Caco-2 (cell line): ENCODE measurements at regions of chr3 and their contacts with region 1.

Region 1: DNA sequence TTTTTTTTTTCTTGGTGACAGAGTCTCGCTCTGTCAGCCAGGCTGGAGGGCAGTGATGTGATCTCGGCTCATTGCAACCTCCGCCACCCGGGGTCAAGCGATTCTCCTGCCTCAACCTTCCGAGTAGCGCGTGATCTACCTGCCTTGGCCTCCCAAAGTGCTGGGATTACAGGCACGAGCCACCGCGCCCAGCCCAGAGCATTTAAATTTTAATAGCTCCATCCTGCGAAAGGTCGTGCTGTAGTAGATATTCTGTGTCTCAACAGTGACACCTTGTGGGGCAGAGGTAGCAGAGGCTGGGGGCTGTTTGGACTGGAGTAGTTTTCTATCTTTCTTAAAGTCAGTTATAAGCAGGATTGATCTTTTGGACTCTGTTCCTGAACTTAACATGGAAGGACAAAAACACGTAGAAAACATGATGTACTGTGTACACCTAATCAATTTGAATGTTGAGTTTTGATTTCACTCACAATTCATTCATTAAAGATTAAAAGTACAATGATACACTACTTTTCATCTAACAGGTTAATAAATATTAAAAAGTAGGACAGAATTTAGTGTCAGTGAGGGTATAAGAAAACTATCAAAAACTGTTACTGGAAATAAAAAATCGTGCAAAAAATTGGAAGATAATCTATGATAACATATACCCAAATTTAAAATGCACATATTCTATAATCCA is 11.0 kb upstream of the PDCD6IP start:
- DNase-seq: peak; percentile 70 to 71
- H3K4me3 ChIP-seq: peak overlapping the region; percentile 38
- H3K4me3 Mint-ChIP-seq: peak overlapping the region; percentile 63
- H3K27ac Mint-ChIP-seq: no peak overlapping the region
- H3K4me1 ChIP-seq: no peaks in the 10 kb centered on the region
- H3K4me1 Mint-ChIP-seq: peaks cover 11% of the 10 kb centered on the region
- H3K27me3 ChIP-seq: no peaks in the 10 kb centered on the region
- H3K27me3 Mint-ChIP-seq: no peaks in the 10 kb centered on the region
- CTCF ChIP-seq: peak; percentile 75 to 82

Region 2: DNA sequence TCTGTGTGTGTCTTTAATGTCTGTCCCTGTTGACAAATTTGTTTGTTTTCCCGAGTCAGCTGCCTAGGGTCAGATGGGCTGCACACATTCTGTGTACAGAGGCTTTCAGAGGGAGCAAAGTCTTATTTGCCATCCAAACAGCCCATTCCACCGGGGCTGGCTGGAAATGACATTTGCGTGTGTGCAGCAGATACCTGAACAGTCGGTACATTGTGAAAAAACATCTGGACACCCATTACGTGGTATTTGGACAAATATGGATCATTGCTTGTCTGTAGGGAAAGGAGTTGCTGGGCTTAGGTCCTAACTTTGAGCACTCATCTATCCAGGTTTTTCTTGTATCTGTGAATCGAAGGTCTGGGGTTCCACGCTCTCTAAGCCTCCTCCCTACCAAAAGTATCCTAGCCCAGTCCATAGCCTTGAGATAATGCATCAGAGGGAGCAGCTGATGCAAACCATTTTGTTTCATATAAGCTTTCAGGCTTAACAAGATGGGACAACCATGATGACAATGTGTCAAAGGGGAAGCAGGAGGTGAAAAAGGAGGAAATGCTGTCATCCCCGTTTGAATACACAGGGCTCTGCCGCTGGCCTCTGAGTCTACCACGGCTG is 1571.2 kb before region 1 on chr3:
- CTCF ChIA-PET with region 1: no interaction called
- POLR2A ChIA-PET with region 1: no interaction called
- intact Hi-C with region 1: no loop called
- DNase-seq: peak; percentile 90
- H3K4me3 ChIP-seq: no peak overlapping the region
- H3K4me3 Mint-ChIP-seq: peak overlapping the region; percentile 71
- H3K27ac Mint-ChIP-seq: peak overlapping the region; percentile 91
- H3K4me1 ChIP-seq: peaks cover 28% of the 10 kb centered on the region
- H3K4me1 Mint-ChIP-seq: peaks cover 7% of the 10 kb centered on the region
- H3K27me3 ChIP-seq: no peaks in the 10 kb centered on the region
- H3K27me3 Mint-ChIP-seq: no peaks in the 10 kb centered on the region
- CTCF ChIP-seq: no peak

Region 3: DNA sequence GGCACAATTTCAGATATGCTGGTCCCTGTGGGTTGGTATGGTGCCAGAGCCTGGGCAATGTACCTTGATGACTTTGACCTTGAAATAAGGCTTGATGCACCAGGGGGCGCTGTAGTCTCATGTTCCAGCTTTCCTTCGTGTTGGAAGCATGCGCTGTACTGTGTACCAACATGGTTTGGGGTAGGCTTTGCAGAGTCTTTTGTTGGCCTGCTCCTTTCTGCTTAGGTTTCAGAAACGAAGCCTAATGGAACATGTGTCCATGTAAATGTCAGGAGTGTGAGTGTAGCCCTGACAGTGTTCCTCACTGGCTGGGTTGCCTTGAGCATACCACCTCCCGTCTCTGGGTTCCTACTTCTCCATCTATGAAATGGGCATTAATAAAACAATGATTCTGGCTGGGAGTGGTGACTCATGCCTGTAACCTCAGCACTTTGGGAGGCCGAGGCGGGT is 839.7 kb before region 1 on chr3:
- CTCF ChIA-PET with region 1: interaction called, 4 read pairs
- POLR2A ChIA-PET with region 1: no interaction called
- intact Hi-C with region 1: loop called (anchors 5 kb)
- DNase-seq: peak; percentile 82 to 85
- H3K4me3 ChIP-seq: no peak overlapping the region
- H3K4me3 Mint-ChIP-seq: no peak overlapping the region
- H3K27ac Mint-ChIP-seq: no peak overlapping the region
- H3K4me1 ChIP-seq: no peaks in the 10 kb centered on the region
- H3K4me1 Mint-ChIP-seq: peaks cover 10% of the 10 kb centered on the region
- H3K27me3 ChIP-seq: no peaks in the 10 kb centered on the region; the same call in 1 of the 2 replicates
- H3K27me3 Mint-ChIP-seq: no peaks in the 10 kb centered on the region
- CTCF ChIP-seq: peak; percentile 54 to 82

Region 4: DNA sequence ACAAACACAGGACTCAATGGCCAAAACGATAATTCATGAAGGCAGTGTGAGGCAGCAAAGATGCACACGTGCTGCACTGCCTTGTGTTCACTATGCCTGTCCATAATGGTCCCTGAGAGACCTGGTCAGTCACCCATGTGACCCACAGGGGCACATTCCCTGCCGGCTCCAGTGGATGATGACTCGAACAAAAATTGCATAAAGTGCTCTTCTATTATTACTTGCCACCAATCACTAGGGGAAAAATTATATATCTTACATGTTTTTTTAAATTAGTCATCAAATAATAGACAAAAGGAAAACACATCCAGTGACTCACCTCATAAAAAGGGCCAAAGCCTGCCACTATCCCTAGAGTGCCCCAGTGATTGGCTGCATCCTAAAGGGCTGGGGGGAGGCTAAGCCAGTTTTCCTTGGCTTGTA is 394.8 kb before region 1 on chr3:
- CTCF ChIA-PET with region 1: no interaction called
- POLR2A ChIA-PET with region 1: no interaction called
- intact Hi-C with region 1: loop called (anchors 10 kb)
- DNase-seq: no peak
- H3K4me3 ChIP-seq: no peak overlapping the region
- H3K4me3 Mint-ChIP-seq: no peak overlapping the region
- H3K27ac Mint-ChIP-seq: no peak overlapping the region
- H3K4me1 ChIP-seq: no peaks in the 10 kb centered on the region
- H3K4me1 Mint-ChIP-seq: no peaks in the 10 kb centered on the region
- H3K27me3 ChIP-seq: no peaks in the 10 kb centered on the region
- H3K27me3 Mint-ChIP-seq: no peaks in the 10 kb centered on the region
- CTCF ChIP-seq: no peak

Region 5: GRCh38 chr3:33544126-33544525 is 243.3 kb before region 1 on chr3:
- CTCF ChIA-PET with region 1: no interaction called
- POLR2A ChIA-PET with region 1: no interaction called
- intact Hi-C with region 1: loop called (anchors 10 kb)
- DNase-seq: no peak
- H3K4me3 ChIP-seq: no peak overlapping the region
- H3K4me3 Mint-ChIP-seq: no peak overlapping the region
- H3K27ac Mint-ChIP-seq: no peak overlapping the region
- H3K4me1 ChIP-seq: no peaks in the 10 kb centered on the region
- H3K4me1 Mint-ChIP-seq: no peaks in the 10 kb centered on the region
- H3K27me3 ChIP-seq: no peaks in the 10 kb centered on the region
- H3K27me3 Mint-ChIP-seq: no peaks in the 10 kb centered on the region
- CTCF ChIP-seq: no peak

Region 6: GRCh38 chr3:33773637-33774036 is 13.8 kb before region 1 on chr3:
- CTCF ChIA-PET with region 1: interaction called, 20 read pairs
- POLR2A ChIA-PET with region 1: no interaction called
- intact Hi-C with region 1: no loop called
- DNase-seq: no peak
- H3K4me3 ChIP-seq: no peak overlapping the region
- H3K4me3 Mint-ChIP-seq: no peak overlapping the region
- H3K27ac Mint-ChIP-seq: no peak overlapping the region
- H3K4me1 ChIP-seq: no peaks in the 10 kb centered on the region
- H3K4me1 Mint-ChIP-seq: no peaks in the 10 kb centered on the region
- H3K27me3 ChIP-seq: no peaks in the 10 kb centered on the region
- H3K27me3 Mint-ChIP-seq: no peaks in the 10 kb centered on the region
- CTCF ChIP-seq: no peak